Activated CD4-positive, alpha-beta T cell treated with anti-CD3 and anti-CD28 coated beads, Interleukin-2, amount 10 ng/mL, durations not matched to agents 24 days and 14 days (primary cell): ENCODE measurements at regions of chr6 and their contacts with region 1.

Region 1: DNA sequence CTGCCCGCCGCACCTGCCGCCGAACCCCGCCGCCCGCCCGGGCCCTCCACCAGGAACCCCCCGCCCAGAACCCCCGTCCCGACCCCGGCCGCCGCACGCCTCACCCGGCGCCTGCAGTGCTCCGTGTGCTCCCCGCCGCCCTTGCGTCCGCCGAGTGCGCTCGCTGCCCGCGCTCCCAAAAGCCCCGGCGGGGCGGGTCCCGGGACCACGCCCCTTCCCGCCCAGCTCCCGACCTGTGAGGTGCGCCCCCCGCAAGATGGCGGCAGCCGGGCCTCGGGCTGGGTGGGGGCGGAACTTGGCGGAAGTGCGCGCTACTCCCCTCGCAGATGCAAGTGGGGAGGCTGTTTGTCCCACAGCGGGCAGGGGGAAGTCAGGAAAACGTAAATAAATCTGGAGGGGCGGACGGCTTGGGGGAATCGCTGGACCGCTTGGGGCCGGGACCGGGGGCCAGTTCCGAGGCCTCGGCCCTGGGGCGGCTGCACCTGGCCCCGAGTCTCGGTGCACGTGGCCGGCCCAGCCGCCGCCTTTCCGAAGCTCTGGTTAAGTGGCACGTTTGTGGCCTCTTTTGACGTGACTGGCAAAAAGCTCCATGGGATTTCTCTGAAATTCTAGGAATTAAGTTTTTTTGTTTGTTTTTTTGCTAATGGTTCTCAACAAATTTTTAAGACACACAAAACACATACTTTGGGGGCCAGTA is at the start of gene EZR:
- DNase-seq: peak; percentile 93
- H3K4me3 Mint-ChIP-seq: peak within 1 kb of the TSS; percentile 88
- H3K27ac Mint-ChIP-seq: peak within 1 kb of the TSS; percentile 92
- H3K4me1 Mint-ChIP-seq: peaks cover 32% of the 10 kb centered on the region
- H3K27me3 Mint-ChIP-seq: no peaks in the 10 kb centered on the region
- total RNA-seq, gene EZR: 204 and 215 TPM in 2 replicates

Region 2: GRCh38 chr6:158769771-158770432 is 49.5 kb before region 1 on chr6:
- intact Hi-C with region 1: no loop called
- DNase-seq: no peak
- H3K4me3 Mint-ChIP-seq: no peak overlapping the region
- H3K27ac Mint-ChIP-seq: peak overlapping the region; percentile 77
- H3K4me1 Mint-ChIP-seq: peaks cover 35% of the 10 kb centered on the region
- H3K27me3 Mint-ChIP-seq: no peaks in the 10 kb centered on the region

Region 3: DNA sequence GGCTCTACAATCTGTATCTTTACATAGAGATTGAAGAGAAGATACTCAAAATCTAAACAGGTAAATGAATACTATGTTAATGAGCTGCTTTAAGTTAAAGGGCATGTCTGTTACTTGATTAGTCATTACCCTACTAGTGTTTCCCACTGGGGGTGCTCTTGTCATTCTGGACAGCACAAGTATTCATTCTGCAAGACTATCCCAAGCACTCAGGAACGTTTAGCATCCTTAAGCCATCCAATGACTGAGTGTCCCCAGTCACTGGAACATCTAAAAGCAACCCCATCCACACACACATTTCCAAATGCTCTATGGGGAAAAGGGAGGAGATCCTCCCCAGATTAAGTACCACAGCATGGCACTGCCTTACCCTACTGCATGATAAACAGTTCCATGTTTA is 25.9 kb before region 1 on chr6:
- intact Hi-C with region 1: loop called (anchors 2 kb)
- DNase-seq: no peak
- H3K4me3 Mint-ChIP-seq: no peak overlapping the region
- H3K27ac Mint-ChIP-seq: no peak overlapping the region
- H3K4me1 Mint-ChIP-seq: peaks cover 72% of the 10 kb centered on the region
- H3K27me3 Mint-ChIP-seq: no peaks in the 10 kb centered on the region

Region 4: GRCh38 chr6:158807515-158808441 is 11.6 kb before region 1 on chr6:
- intact Hi-C with region 1: loop called (anchors 1 kb)
- DNase-seq: no peak
- H3K4me3 Mint-ChIP-seq: no peak overlapping the region
- H3K27ac Mint-ChIP-seq: peak overlapping the region; percentile 40
- H3K4me1 Mint-ChIP-seq: peaks cover 78% of the 10 kb centered on the region
- H3K27me3 Mint-ChIP-seq: no peaks in the 10 kb centered on the region

Region 5: GRCh38 chr6:158853072-158853871 is 33.9 kb after region 1 on chr6:
- intact Hi-C with region 1: loop called (anchors 1 kb)
- DNase-seq: peak; percentile 96
- H3K4me3 Mint-ChIP-seq: no peak overlapping the region
- H3K27ac Mint-ChIP-seq: no peak overlapping the region
- H3K4me1 Mint-ChIP-seq: peaks cover 32% of the 10 kb centered on the region
- H3K27me3 Mint-ChIP-seq: no peaks in the 10 kb centered on the region

Region 6: GRCh38 chr6:158869826-158870648 is 50.7 kb after region 1 on chr6:
- intact Hi-C with region 1: loop called (anchors 1 kb)
- DNase-seq: peak; percentile 96
- H3K4me3 Mint-ChIP-seq: peak overlapping the region; percentile 86
- H3K27ac Mint-ChIP-seq: peak overlapping the region; percentile 98
- H3K4me1 Mint-ChIP-seq: peaks cover 29% of the 10 kb centered on the region
- H3K27me3 Mint-ChIP-seq: peaks cover 4% of the 10 kb centered on the region